BJ (cell line): ENCODE measurements at regions of chr3 and their contacts with region 1.

Region 1: DNA sequence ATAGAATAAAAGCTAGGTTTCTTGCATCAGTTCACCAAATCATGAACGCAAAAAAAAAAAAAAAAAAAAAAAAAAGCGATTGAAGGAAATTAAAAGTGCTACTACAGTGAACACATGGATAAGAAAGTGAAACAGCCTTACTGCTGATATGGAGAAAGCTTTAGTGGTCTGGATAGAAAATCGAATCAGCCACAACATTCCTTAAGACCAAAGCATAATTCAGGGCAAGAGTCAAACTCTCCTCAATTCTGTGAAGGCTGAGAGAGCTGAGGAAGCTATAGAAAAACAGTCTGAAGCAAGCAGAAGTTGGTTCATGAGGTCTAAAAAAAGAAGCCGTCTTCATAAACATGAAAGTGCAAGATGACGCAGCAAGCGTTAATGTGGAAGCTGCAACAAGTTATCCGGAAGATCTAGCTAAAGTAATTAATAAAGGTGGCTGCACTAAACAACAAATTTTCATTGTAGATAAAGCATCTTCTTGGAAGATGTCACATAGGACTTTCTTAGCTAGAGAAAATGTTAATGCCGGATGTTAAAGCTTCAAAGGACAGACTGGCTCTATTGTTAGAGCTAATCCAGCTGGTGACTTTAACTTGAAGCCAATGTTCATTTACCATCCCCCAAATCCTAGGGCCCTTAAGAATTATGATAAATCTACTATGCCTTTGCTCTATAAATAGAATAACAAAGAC is 19.2 kb downstream of the P3H2 start:
- DNase-seq: no peak
- H3K4me3 ChIP-seq: no peak overlapping the region
- H3K27me3 ChIP-seq: no peaks in the 10 kb centered on the region
- CTCF ChIP-seq: no peak

Region 2: DNA sequence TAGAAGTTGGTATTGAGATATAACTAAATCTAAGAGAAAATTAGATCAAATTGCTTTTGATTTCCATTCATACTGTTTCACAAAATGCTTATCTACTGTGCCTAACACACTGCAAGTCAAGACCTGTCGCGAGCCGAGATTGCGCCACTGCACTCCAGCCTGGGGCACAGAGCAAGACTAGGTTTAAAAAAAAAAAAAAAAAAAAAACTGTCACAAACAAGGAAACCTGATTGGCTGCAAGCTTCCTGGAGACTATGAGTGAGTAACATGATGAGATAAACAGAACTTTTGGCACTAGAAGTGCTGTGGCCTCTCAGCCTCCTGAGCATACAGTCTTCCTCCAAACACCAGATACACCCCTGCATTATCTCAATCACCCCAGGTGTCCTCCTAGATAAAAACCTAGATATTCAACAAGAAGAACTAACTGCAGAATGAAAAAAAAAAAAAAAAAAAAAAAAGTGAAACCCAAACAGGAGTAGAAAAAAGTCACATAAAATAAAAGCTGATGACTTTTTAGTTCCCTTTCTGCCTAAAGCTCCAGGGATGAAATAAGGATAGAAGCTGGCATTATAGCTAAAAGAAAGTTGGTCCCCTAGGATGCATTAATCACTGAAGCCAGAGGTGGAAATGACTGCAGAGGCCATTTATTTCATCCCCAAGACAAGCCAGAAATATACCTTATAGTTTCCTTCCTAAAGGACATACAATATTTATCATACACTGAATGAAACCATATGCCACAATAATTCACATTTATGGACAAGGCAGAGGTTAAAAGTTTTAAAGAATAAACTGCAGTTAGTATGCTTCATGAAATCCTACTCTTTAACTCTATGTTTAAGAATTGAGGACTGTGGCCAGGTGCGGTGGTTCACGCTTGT is 63.2 kb before region 1 on chr3:
- CTCF ChIA-PET with region 1: no interaction called
- POLR2A ChIA-PET with region 1: interaction called, 11 read pairs
- DNase-seq: no peak
- H3K4me3 ChIP-seq: no peak overlapping the region
- H3K27me3 ChIP-seq: no peaks in the 10 kb centered on the region
- CTCF ChIP-seq: no peak

Region 3: GRCh38 chr3:190224863-190225692 is 123.6 kb after region 1 on chr3:
- CTCF ChIA-PET with region 1: no interaction called
- POLR2A ChIA-PET with region 1: no interaction called
- DNase-seq: peak; percentile 11
- H3K4me3 ChIP-seq: no peak overlapping the region
- H3K27me3 ChIP-seq: no peaks in the 10 kb centered on the region
- CTCF ChIP-seq: peak; percentile 57

Region 4: GRCh38 chr3:190357468-190357867 is 256.0 kb after region 1 on chr3:
- CTCF ChIA-PET with region 1: no interaction called
- POLR2A ChIA-PET with region 1: no interaction called
- DNase-seq: no peak
- H3K4me3 ChIP-seq: no peak overlapping the region
- H3K27me3 ChIP-seq: no peaks in the 10 kb centered on the region
- CTCF ChIP-seq: no peak

Region 5: DNA sequence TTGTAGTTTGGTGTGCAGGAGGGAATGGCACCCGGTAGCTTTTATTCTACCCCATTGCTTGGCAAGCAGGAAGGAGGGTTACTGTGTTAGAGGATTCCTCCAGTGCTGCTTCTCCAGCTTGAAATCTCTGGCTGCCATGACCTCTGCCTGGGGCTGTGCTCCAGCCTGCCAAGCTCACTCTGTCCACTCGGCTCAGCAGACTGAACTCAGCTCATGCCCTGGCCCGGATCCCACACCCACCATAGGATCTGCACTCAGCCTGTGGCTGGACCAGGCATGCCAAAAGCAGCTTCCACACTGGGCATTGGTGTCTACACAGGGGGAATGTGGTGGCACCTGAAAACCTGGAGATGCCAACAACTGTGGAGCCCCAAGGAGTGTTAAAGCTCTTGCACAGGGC is 312.8 kb after region 1 on chr3:
- CTCF ChIA-PET with region 1: no interaction called
- POLR2A ChIA-PET with region 1: no interaction called
- DNase-seq: no peak
- H3K4me3 ChIP-seq: no peak overlapping the region
- H3K27me3 ChIP-seq: no peaks in the 10 kb centered on the region
- CTCF ChIP-seq: no peak